A673 (cell line): ENCODE measurements at regions of chr2 and their contacts with region 1.

Region 1: GRCh38 chr2:5365871-5366461 is 326.2 kb upstream of the SOX11 start:
- DNase-seq: peak; percentile 92
- H3K4me3 ChIP-seq: no peak overlapping the region
- H3K27ac ChIP-seq: no peak overlapping the region
- H3K4me1 ChIP-seq: peaks cover 4% of the 10 kb centered on the region
- H3K27me3 ChIP-seq: no peaks in the 10 kb centered on the region
- CTCF ChIP-seq: peak; percentile 96

Region 2: GRCh38 chr2:4992226-4992625 is 373.7 kb before region 1 on chr2:
- CTCF ChIA-PET with region 1: no interaction called
- POLR2A ChIA-PET with region 1: no interaction called
- intact Hi-C with region 1: loop called (anchors 2 kb)
- DNase-seq: peak; percentile 55
- H3K4me3 ChIP-seq: no peak overlapping the region
- H3K27ac ChIP-seq: no peak overlapping the region
- H3K4me1 ChIP-seq: no peaks in the 10 kb centered on the region
- H3K27me3 ChIP-seq: no peaks in the 10 kb centered on the region
- CTCF ChIP-seq: peak; percentile 51

Region 3: DNA sequence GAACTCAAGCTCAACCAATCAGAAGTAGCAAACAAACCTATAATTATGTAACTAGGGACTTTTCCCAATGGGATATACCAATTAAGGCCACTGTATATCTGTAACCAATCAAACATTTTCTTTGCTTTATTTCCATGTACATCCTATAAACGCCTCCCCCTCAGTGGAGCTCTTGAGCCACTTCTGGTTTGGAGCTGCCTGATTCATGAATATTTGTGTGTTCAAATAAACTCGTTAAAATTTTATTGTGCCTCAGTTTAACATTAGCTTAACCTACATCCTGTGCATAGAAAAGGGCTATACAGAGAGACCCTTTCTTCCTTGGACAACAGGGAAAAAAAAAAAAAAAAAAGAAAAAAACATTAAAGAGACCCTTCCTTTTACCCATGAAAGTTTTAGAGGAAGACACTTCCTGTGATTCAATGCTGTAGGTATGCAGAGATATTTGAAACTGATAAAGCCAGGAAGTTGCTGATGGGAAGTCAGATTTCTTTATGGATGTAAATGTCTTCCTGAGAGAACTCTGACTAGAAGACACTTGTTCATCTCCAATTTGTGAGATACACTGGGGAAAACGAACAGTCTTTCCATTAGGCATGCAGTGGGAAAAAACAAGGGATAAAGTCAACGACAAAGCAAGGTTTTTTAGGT is 288.4 kb before region 1 on chr2:
- CTCF ChIA-PET with region 1: interaction called, 3 read pairs
- POLR2A ChIA-PET with region 1: no interaction called
- intact Hi-C with region 1: loop called (anchors 2 kb)
- DNase-seq: peak; percentile 85
- H3K4me3 ChIP-seq: no peak overlapping the region
- H3K27ac ChIP-seq: no peak overlapping the region
- H3K4me1 ChIP-seq: peaks cover 10% of the 10 kb centered on the region
- H3K27me3 ChIP-seq: no peaks in the 10 kb centered on the region
- CTCF ChIP-seq: peak; percentile 47